Right cardiac atrium (tissue), 5 donors: ENCODE measurements at regions of chr11 and their contacts with region 1.

Region 1: GRCh38 chr11:9757809-9758636 is 94.1 kb downstream of the SWAP70 start:
- DNase-seq: peak; percentile 90 to 97 (median 96)
- ATAC-seq: peak; percentile 72 to 75
- H3K4me3 ChIP-seq: peak overlapping the region; percentile 57
- H3K27ac ChIP-seq: peak overlapping the region; percentile 86
- H3K4me1 ChIP-seq: peaks cover 9% of the 10 kb centered on the region
- H3K27me3 ChIP-seq: no peaks in the 10 kb centered on the region

Region 2: DNA sequence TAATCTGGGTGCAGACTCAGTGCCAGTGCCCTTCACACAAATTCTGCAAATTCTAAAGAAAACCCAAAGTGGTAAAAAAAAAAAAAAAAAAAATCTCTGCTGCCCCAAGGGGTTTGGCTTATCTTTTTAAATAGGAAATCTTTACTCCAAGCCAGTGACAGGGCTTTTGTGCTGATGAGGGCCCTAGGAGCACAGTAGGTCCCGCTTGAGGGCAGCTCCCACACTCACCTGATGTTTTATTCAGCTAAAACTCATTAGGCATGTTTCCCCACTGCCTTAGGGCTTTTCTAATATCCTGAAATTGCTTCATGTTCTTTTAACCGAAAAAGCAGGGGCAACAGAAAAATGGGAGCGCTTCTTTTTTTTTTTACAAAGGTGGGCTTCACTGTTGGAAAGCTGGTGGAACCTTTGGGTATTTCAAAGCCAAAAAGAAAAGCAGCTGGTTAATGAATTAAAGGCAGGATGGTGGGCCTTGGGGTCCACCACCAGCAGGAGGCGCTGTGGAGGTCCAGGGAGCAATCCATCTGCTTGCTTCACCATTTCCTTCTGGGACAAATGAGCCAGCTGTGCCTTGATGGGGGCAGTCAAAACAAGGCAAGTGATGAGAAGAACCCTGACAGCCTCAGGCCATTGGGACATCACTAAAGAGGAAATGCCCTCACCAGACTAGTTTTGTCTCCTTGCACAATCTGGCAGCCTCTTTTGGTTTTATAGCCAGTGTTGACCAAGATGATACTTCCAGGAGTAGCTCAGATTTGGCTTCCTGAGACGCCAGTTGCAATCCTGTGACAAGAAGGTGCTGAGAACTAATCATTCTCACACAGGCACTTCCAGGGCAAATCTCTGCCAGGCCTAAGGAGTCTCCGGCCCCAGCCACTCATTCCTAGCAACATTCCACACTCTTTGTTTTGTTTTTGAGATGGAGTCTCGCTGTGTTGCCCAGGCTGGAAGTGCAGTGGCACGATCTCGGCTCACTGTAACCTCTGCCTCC is 222.9 kb before region 1 on chr11:
- intact Hi-C with region 1: no loop called
- DNase-seq: peak; percentile 84 to 90 (median 90)
- ATAC-seq: peak; percentile 55 to 76
- H3K4me3 ChIP-seq: no peak overlapping the region
- H3K27ac ChIP-seq: no peak overlapping the region
- H3K4me1 ChIP-seq: peaks cover 3% of the 10 kb centered on the region
- H3K27me3 ChIP-seq: no peaks in the 10 kb centered on the region

Region 3: DNA sequence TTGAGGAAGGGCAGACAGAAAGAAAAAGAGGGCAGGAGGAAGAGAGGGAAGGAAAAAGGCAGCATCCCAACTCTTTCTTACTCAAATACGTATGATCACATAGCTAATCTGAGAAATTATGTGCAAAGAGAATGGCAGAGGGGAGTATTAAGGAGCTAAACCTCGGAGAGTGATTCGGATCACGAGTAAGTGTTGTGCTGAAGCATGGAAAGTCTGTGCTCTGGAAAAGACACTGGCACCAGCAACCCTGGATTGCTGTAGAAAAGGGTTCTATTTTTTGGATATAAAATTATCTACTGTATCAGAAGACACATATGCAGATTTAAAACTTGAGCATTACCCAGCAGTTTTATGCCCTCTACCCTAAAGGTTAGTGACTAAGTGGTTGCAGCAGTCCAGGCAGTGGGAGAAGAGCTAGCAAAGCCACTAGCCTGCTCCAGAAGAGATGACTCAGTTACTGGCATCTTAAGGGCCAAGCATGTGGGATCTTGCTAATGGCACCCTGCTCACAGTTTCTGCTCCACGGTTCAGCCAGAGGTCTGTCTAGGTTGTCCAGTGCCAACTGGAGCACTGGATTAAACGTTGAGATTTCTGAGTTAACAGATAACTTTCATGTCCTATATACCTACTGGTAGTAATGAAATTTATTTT is 57.6 kb after region 1 on chr11:
- intact Hi-C with region 1: loop called in 1 of 4 experiments (anchors 10 kb)
- DNase-seq: peak in 1 of 3 donors; percentile 18
- ATAC-seq: peak in 1 of 2 donors; percentile 53
- H3K4me3 ChIP-seq: no peak overlapping the region
- H3K27ac ChIP-seq: no peak overlapping the region
- H3K4me1 ChIP-seq: no peaks in the 10 kb centered on the region
- H3K27me3 ChIP-seq: no peaks in the 10 kb centered on the region

Region 4: GRCh38 chr11:9875862-9876261 is 117.8 kb after region 1 on chr11:
- intact Hi-C with region 1: no loop called
- DNase-seq: no peak
- ATAC-seq: no peak
- H3K4me3 ChIP-seq: no peak overlapping the region
- H3K27ac ChIP-seq: no peak overlapping the region
- H3K4me1 ChIP-seq: no peaks in the 10 kb centered on the region
- H3K27me3 ChIP-seq: no peaks in the 10 kb centered on the region

Region 5: GRCh38 chr11:9972989-9973388 is 215.0 kb after region 1 on chr11:
- intact Hi-C with region 1: loop called (anchors 2 to 5 kb)
- DNase-seq: no peak
- ATAC-seq: peak; percentile 65 to 75
- H3K4me3 ChIP-seq: no peak overlapping the region
- H3K27ac ChIP-seq: no peak overlapping the region
- H3K4me1 ChIP-seq: no peaks in the 10 kb centered on the region
- H3K27me3 ChIP-seq: no peaks in the 10 kb centered on the region